ENCODE measurements at regions of chr5 and their contacts with region 1.

Region 1: DNA sequence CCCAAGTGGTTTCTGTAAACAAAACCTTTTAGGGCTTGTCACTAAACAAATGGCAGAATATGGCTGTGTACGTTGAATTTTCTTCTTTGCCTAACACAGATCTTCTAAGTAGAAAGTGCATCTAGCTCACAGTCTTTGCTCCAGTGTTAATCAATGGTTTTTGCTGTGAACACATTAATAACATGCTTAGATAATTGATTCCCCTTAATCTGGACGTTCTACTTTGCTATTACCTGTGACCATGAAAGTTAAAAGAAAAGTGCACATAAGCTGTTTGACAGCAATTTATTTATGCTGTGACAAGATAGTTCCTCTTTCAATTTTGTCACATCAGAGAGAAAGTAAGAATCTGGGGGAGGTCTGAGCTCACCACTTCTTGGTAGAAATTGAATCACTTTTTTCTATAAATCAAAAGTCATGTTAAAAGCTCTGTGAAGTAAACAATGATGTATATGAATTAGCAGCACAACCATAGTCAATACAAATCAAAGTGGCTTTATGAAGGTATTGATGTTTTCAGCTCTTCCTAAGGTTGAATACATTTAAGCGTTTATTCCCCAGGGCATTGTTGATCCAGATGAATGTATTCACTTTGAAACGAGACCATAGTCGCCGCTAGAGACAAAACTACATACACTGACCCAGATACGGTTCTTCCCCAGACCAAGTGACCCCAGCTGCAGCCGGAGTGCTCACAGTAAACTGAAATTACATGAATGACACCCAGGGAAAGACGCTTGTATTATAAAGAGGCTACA is 174.6 kb upstream of the ZNF608 start:
- DNase-seq: peak; percentile 90
- H3K4me3 ChIP-seq: peak overlapping the region; percentile 62
- H3K27ac ChIP-seq: peak overlapping the region; percentile 88
- H3K4me1 ChIP-seq: peaks cover 66% of the 10 kb centered on the region
- CTCF ChIP-seq: peak; percentile 36; the same call in 1 of the 2 replicates

Region 2: DNA sequence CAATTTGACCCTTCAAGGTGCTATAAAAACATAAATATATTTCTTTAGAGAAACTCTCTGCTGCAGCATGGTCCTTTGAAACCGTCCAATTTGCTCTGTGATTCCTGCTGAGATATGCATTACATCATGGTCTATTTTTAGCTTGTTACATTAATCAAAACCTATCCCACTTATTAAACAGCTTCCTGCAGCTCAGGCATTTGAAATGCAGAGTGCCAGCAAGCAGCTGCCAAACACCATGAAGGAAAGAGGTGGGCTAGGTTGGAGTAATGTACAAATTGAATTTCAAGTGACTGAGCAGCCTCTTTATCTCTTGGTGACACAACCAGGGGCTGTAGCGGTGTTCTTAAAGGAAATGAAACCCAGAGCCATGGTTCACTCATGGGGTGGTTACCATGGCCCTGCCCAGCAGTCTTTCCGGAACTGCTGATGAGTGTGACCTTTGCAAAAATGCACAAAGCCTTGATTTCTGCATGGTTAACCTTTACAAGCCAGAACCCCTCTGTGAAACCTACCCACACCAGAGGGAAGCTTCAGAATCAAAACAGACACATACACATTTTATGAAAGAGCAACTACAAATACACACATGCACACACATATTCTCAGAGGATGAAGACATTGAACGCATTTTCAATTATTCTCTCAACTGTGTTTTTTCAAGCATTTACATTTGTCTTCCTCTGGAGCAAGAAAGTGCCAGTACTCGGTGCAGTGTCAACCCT is 18.8 kb before region 1 on chr5:
- CTCF ChIA-PET with region 1: no interaction called
- POLR2A ChIA-PET with region 1: interaction called, 27 read pairs
- intact Hi-C with region 1: no loop called
- DNase-seq: peak; percentile 81
- H3K4me3 ChIP-seq: peak overlapping the region; percentile 12
- H3K27ac ChIP-seq: peak overlapping the region; percentile 41
- H3K4me1 ChIP-seq: peaks cover 33% of the 10 kb centered on the region
- CTCF ChIP-seq: no peak

Region 3: GRCh38 chr5:124932791-124933600 is 11.9 kb after region 1 on chr5:
- CTCF ChIA-PET with region 1: interaction called, 3 read pairs
- POLR2A ChIA-PET with region 1: interaction called, 10 read pairs
- intact Hi-C with region 1: no loop called
- DNase-seq: no peak
- H3K4me3 ChIP-seq: no peak overlapping the region
- H3K27ac ChIP-seq: no peak overlapping the region
- H3K4me1 ChIP-seq: peaks cover 18% of the 10 kb centered on the region
- CTCF ChIP-seq: no peak

Region 4: GRCh38 chr5:125012727-125013451 is 91.8 kb after region 1 on chr5:
- CTCF ChIA-PET with region 1: no interaction called
- POLR2A ChIA-PET with region 1: no interaction called
- intact Hi-C with region 1: no loop called
- DNase-seq: no peak
- H3K4me3 ChIP-seq: no peak overlapping the region
- H3K27ac ChIP-seq: no peak overlapping the region
- H3K4me1 ChIP-seq: peaks cover 48% of the 10 kb centered on the region
- CTCF ChIP-seq: no peak

Region 5: GRCh38 chr5:125236981-125237380 is 315.9 kb after region 1 on chr5:
- CTCF ChIA-PET with region 1: no interaction called
- POLR2A ChIA-PET with region 1: no interaction called
- intact Hi-C with region 1: no loop called
- DNase-seq: no peak
- H3K4me3 ChIP-seq: no peak overlapping the region
- H3K27ac ChIP-seq: no peak overlapping the region
- H3K4me1 ChIP-seq: no peaks in the 10 kb centered on the region
- CTCF ChIP-seq: no peak

Measured in OCI-LY7 (cell line).